ENCODE measurements at regions of chr10 and their contacts with region 1.

Region 1: DNA sequence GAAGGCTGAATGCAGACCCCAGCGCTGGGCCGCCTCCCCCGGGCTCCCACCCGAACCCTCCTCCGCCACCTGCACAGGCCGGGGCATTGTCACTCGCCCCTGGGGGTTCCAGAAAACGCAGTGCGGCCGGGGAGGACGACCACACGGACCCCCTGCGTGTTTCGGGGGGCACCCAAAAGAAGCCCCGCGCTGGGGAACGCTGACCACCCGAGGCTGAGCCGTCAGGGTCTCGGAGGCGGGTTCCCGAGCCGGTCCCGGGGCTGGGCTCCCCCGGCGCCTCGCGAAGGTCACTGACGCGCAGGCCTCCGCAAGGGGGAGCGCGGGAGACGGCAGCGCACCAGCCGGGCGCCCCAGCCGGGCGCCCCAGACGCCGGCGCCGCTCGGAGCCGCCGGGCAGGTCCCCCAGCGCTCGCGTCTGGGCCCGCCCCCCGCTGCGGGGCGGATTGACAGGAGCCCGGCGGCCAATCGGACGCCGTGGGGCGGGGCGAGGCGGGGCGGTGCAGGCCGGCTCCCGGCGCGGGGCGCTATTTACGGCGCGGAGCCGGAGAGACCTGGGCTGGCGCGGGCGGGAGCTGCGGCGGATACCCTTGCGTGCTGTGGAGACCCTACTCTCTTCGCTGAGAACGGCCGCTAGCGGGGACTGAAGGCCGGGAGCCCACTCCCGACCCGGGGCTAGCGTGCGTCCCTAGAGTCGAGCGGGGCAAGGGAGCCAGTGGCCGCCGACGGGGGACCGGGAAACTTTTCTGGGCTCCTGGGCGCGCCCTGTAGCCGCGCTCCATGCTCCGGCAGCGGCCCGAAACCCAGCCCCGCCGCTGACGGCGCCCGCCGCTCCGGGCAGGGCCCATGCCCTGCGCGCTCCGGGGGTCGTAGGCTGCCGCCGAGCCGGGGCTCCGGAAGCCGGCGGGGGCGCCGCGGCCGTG is at the start of gene BAMBI:
- DNase-seq: peak; percentile 62 to 98 (median 90)
- H3K4me3 ChIP-seq: peak within 1 kb of the TSS; percentile 62 to 100 (median 83)
- H3K27ac ChIP-seq: peak within 1 kb of the TSS in 55 of 59 donors; percentile 38 to 92 (median 78)
- H3K27me3 ChIP-seq: peaks cover 0 to 10% (median 0%) of the 10 kb centered on the region in 45 donors
- CTCF ChIP-seq: peak in 55 of 56 donors; percentile 14 to 96 (median 64)
- total RNA-seq, gene BAMBI: 4.1 to 18.6 (median 8.8) TPM

Region 2: DNA sequence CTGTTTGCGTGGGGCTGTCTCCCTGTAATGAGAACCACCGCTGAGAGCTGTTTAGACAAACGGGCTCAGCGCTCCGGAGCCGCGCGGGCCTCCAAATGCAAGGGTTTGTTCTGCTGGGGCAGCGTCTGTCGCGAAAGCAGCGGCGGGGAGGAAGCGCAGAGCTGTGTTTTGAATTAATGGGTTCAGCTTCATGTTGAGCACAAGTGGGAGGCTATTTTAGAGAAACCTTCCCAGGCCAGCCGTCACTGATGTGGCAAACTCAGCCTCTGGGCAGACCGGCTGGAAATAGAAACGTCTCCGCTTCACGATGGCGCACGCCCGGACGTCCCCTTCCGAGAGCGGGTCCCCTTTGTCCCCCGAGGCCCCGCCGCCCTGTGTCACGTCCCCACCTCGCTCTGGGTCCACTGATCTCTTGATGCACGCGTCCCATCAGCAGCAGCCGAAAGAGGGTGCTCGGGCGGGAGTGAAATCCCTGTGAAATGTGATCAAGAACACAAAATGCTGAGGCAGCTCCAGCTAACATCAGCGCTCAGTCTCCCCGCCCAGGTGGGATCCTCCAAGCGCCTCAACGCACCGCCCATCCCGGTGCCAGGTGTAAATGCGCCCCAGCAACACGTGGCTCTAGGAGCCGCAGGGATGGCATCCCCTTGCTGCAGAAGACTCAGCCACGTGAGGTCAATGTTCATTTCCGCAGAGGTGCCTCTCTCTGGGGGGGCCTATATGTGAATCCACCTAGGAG is 45.0 kb after region 1 on chr10:
- intact Hi-C with region 1: loop called in 1 of 2 experiments (anchors 5 kb)
- DNase-seq: peak; percentile 10 to 70 (median 57)
- H3K4me3 ChIP-seq: peak overlapping the region; percentile 42 to 81 (median 65)
- H3K27ac ChIP-seq: peak overlapping the region in 30 of 59 donors; percentile 3 to 78 (median 46)
- H3K27me3 ChIP-seq: peaks cover 0 to 5% (median 0%) of the 10 kb centered on the region in 45 donors
- CTCF ChIP-seq: peak in 6 of 56 donors; percentile 12 to 29 (median 18)

Region 3: GRCh38 chr10:28788252-28788651 is 111.0 kb after region 1 on chr10:
- intact Hi-C with region 1: loop called (anchors 5 kb)
- DNase-seq: no peak
- H3K4me3 ChIP-seq: peak overlapping the region in 6 of 59 donors; percentile 34 to 53 (median 40)
- H3K27ac ChIP-seq: peak overlapping the region in 58 of 59 donors; percentile 54 to 99 (median 91)
- H3K27me3 ChIP-seq: no peaks in the 10 kb centered on the region
- CTCF ChIP-seq: no peak

Region 4: DNA sequence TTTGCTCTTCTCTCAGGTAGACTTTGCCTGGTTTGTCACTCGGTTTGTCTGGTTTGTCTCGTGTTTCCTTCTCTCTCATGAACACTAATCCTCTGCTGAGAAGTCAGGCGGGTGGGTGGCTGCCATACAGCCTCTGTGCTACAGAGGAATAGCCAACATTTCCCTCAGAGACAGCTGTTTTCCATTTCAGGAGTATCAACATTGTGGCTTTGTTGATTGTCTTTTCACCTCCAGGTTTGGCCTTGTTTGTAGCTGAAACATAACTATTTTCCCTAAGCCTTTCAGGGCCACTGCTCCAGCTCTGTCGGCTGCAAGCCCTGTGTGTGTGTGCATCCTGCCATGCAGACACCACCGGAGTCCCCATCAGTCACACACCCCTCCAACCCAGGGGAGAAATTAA is 122.9 kb after region 1 on chr10:
- intact Hi-C with region 1: no loop called
- DNase-seq: no peak
- H3K4me3 ChIP-seq: no peak overlapping the region
- H3K27ac ChIP-seq: no peak overlapping the region
- H3K27me3 ChIP-seq: no peaks in the 10 kb centered on the region
- CTCF ChIP-seq: no peak

Region 5: DNA sequence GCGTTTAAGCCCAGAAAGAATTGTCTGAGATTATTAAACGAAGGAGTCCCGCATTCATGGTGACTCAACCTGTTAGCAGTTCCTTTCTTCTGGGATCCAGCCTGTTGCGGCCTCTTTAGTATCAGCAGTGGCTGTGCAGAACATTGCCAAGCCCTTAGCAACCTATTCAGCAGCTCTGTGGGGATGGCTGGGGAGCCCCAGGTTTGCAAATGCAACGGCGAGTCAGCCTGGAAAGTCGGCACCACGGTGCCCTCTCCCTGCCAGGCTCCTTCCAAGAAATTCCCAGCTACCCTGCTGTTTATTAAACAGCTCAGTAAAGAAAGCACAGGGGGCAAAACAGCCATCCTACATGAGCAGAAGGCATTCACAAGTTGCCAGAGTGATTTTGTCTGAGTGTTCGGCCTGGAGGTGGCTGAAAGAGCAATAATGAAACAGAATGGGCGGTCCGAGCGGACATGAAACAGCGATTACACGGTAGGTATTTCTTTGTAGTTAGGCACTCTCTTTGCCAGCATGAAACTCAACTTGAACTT is 198.4 kb after region 1 on chr10:
- intact Hi-C with region 1: loop called (anchors 1 to 5 kb)
- DNase-seq: peak in 6 of 10 donors; percentile 20 to 55 (median 36)
- H3K4me3 ChIP-seq: peak overlapping the region in 16 of 59 donors; percentile 1 to 35 (median 16)
- H3K27ac ChIP-seq: no peak overlapping the region
- H3K27me3 ChIP-seq: peaks cover 0 to 4% (median 0%) of the 10 kb centered on the region in 45 donors
- CTCF ChIP-seq: peak in 5 of 56 donors; percentile 8 to 42 (median 21)

Region 6: DNA sequence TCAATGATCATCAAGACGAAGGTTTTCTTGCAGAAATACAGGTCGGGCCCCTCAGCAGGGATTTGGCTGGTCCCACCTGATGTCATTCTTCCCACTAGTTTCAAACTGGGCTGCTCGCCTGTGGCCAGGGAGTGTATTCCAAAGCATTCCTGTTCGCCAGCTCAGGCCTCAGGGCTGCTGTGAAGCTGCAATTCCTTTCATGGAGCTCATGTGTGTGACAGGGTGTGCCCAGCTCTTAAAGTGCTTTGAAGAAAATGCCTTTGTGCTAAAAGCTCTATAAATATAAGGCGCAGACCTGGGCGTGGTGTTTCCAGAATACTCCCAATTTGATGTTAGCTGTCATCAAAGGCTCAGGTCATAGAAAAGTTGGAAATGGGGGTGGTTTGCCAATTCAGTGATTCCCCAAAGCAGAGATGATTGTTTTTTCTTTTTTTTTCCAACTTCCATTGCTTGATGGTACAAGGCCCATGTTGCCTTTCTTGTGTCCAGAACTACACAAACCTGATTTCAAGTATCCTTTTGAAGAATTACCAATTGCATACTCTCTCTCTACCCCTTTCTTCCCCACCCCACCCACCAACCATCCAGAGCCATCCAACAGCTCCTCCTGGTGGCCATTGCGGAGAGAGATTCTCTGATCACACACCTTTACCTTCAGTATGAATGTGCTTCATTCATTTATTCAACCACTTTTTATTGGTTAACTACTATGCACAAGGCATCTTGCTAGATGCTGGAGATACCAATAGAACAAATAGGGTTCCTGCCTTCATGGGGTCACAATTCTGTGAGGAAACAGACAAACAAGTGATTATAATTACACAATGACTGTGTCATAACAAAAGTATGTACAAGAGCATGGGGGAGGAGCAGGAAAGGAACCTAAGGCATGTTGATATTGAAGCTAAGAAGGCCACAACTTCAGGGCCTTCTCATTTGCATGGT is 314.4 kb after region 1 on chr10:
- intact Hi-C with region 1: loop called in 1 of 2 experiments (anchors 5 kb)
- DNase-seq: no peak
- H3K4me3 ChIP-seq: no peak overlapping the region
- H3K27ac ChIP-seq: peak overlapping the region in 1 of 59 donors; percentile 35
- H3K27me3 ChIP-seq: peaks cover 0 to 3% (median 0%) of the 10 kb centered on the region in 45 donors
- CTCF ChIP-seq: peak; percentile 20 to 69 (median 50)

Region 7: DNA sequence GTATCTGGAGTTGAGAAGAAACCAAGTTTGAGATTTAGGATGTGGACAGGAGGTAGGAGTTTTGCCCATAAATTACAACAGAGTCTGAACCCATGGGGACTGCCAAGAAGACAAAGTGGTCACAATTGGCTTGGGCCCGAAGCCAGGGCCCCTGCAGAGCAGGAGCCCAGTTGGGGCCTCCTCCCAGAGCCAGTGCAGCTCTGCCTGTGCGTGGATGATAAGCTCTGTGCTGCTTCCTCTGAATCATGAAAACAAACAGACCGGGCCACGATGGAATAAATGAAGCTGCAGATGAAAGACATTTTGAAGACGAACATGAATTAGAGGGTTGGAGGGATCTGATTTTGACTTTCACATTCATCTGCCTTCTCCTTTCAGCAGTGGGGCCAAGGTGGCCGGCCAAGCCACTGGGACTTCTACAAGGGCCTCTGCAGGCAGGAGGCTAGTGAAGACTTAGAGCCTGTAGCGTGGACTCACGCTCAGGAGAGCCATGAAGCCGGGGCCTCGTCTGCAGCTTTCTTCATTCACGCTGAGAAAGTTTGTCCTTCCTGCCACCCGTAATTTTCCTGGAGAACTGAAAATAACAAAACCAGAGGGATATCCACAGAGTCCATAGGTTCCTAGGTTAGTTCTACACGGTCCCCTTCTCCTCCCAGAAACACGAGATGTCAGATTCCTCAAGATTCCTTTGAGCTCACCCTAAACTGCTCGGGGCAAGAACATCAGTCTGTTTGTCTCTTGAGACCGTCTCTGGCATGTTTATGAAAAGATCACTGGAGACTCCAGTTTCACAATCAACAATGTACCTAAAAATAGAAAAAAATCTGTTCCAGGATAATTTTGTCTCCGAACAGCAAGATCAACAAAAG is 455.0 kb after region 1 on chr10:
- intact Hi-C with region 1: loop called in 1 of 2 experiments (anchors 5 kb)
- DNase-seq: no peak
- H3K4me3 ChIP-seq: peak overlapping the region in 1 of 59 donors; percentile 1
- H3K27ac ChIP-seq: peak overlapping the region in 31 of 59 donors; percentile 4 to 80 (median 47)
- H3K27me3 ChIP-seq: peaks cover 0 to 14% (median 0%) of the 10 kb centered on the region in 45 donors
- CTCF ChIP-seq: no peak